ENCODE measurements at regions of chr2 and their contacts with region 1.

Region 1: GRCh38 chr2:112869258-112869885 is 32.8 kb upstream of the IL1B start:
- DNase-seq: peak; percentile 66 to 86 (median 80)
- ATAC-seq: peak; percentile 77 to 94 (median 84)
- H3K4me3 ChIP-seq: no peak overlapping the region
- H3K27ac ChIP-seq: no peak overlapping the region
- H3K4me1 ChIP-seq: peaks cover 0 to 20% (median 1%) of the 10 kb centered on the region in 12 donors
- H3K27me3 ChIP-seq: peaks cover 0 to 14% (median 0%) of the 10 kb centered on the region in 9 donors
- CTCF ChIP-seq: no peak
- POLR2A ChIP-seq: no peak

Region 2: DNA sequence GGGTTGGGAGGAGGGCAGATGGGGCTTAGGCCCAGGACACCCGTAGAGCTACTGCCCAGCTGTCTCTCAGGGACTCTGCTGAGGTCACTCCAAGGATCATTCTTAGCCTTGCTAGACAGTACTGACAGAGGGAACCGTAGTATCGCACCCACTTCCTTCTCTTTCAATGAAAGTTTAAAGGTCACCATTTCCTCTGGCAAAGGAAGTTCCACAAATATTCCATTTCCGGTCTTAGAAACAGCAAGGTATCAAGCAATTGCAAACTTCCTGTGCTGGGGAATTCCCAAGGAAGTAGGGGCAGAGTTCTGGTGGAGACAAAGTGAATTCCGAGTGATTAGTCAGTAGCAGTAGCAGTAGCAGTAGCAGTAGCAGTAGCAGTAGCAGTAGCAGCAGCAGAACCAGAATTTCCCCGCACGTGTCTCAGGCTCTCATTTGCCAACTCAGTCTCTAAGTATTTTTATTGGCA is 57.5 kb before region 1 on chr2:
- intact Hi-C with region 1: loop called in 2 of 10 experiments (anchors 5 kb)
- DNase-seq: peak in 3 of 5 donors; percentile 32 to 57 (median 46)
- ATAC-seq: peak; percentile 72 to 96 (median 88)
- H3K4me3 ChIP-seq: no peak overlapping the region
- H3K27ac ChIP-seq: peak overlapping the region in 10 of 12 donors; percentile 23 to 67 (median 50)
- H3K4me1 ChIP-seq: peaks cover 0 to 33% (median 25%) of the 10 kb centered on the region in 12 donors
- H3K27me3 ChIP-seq: no peaks in the 10 kb centered on the region
- CTCF ChIP-seq: no peak
- POLR2A ChIP-seq: no peak

Region 3: DNA sequence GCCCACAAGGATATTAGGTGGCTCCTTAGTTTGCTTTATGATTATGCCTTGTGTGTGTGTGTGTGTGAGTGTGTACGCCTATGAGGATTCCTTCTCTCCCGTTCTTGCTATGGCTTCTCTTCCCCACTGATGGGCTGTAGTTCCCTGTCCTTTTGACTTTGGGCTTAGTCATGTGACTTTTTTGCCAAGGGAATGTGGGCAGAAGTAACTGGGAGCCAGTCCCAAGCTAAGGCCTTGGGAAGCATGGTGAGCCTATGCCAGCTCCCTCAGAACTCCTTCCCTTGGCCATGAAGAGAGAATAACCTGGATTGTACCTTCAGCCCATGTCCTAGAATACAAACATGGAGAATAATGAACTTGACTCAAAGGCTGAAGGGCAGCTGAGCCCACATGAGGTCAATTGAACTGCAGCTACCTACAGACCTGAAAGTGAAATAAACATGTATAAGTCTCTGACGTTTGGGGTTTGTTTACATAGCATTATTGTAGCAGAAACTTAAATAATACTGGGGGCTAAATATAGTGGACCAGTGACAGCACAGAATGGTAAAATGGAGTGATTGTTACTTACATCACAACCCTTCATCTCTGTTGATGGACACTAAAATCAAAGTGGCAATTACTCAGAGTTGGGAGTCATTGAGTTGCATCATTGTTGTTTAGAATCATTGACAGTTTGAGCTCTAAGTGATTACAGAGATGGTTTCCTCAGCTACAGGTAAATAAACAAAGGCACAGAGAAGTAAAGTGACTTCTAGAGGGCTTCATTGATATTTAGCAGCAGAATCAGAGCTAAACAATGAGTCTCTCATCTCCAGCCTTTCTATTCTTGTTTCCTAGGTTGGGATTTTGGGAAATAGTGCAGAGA is 93.2 kb after region 1 on chr2:
- intact Hi-C with region 1: no loop called
- DNase-seq: no peak
- ATAC-seq: no peak
- H3K4me3 ChIP-seq: no peak overlapping the region
- H3K27ac ChIP-seq: no peak overlapping the region
- H3K4me1 ChIP-seq: no peaks in the 10 kb centered on the region
- H3K27me3 ChIP-seq: peaks cover 0 to 12% (median 0%) of the 10 kb centered on the region in 9 donors
- CTCF ChIP-seq: no peak
- POLR2A ChIP-seq: no peak

Measured in heart left ventricle (tissue), 16 donors.